RWPE1 (cell line): ENCODE measurements at regions of chr18 and their contacts with region 1.

Region 1: DNA sequence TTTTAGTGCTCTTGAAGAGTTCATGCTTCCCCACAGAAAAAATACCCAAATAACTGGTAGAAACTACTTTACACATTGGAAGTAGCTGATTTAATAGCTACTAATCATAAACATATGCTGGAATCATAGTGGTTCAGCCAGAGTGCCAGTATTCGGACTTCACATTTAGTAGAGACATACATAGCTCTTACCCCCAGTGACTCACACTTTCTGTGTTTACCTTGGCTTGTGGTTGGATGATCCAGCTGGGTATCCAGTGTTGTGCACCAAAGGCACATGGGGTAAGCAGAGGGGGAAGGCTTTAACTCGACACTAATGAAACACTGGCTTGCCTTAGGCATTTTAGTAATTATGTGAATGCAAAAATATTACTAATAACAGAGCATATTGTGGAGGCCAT is 18.1 kb downstream of the ARHGAP28 start:
- DNase-seq: peak; percentile 34
- H3K27ac ChIP-seq: no peak overlapping the region
- CTCF ChIP-seq: no peak

Region 2: DNA sequence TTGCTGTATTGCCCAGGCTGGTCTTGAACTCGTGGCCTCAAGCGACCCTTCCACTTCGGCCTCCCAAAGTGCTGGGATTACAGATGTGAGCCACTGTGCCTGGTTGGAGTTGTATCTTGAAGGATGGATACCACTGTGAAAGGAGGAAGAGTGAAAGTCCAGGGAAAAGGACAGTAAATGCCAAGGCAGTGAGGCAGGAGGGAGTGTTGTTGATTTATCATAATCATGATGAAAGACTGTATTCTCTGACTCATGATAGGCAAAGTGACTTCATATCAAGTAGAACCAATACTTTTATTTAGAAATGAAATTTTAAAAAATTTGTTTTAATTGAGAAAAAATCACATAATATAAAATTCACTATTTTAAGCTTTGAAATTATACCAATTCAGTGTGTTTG is 144.1 kb after region 1 on chr18:
- CTCF ChIA-PET with region 1: interaction called, 14 read pairs
- POLR2A ChIA-PET with region 1: no interaction called
- DNase-seq: no peak
- H3K27ac ChIP-seq: no peak overlapping the region
- CTCF ChIP-seq: no peak